Activated naive CD4-positive, alpha-beta T cell treated with anti-CD3 and anti-CD28 coated beads for 36 hours (primary cell): ENCODE measurements at regions of chr16 and their contacts with region 1.

Region 1: DNA sequence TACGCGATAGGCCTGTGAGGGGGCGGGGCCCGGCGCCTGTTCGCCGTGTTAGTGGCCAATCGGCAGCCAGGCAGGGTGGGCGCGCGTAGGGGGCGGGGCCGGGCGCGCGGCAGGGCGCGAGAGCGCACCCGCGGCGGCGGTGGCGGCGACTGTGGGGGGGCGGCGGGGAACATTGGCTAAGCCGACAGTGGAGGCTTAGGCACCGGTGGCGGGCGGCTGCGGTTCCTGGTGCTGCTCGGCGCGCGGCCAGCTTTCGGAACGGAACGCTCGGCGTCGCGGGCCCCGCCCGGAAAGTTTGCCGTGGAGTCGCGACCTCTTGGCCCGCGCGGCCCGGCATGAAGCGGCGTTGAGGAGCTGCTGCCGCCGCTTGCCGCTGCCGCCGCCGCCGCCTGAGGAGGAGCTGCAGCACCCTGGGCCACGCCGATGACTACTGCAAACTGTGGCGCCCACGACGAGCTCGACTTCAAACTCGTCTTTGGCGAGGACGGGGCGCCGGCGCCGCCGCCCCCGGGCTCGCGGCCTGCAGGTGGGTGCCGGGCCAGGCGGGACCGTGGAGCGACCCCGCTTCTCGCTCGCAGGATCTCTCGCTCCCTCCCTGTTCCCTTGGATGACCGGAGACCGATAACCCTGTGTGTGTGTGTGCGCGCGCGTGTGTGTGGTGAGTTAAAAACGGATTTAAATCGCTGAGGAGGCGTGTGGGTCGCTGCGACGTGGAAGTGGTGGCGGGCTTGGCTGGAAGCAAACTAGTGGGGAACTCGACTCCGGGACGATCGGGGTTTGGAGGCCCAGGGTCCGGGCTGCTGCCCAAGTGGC is at the start of gene NFATC3:
- DNase-seq: peak; percentile 99
- H3K4me3 Mint-ChIP-seq: peak within 1 kb of the TSS; percentile 81
- H3K27ac Mint-ChIP-seq: peak within 1 kb of the TSS; percentile 95
- H3K4me1 Mint-ChIP-seq: peaks cover 64% of the 10 kb centered on the region
- H3K27me3 Mint-ChIP-seq: no peaks in the 10 kb centered on the region
- total RNA-seq, gene NFATC3: 49.1 to 50.3 TPM

Region 2: DNA sequence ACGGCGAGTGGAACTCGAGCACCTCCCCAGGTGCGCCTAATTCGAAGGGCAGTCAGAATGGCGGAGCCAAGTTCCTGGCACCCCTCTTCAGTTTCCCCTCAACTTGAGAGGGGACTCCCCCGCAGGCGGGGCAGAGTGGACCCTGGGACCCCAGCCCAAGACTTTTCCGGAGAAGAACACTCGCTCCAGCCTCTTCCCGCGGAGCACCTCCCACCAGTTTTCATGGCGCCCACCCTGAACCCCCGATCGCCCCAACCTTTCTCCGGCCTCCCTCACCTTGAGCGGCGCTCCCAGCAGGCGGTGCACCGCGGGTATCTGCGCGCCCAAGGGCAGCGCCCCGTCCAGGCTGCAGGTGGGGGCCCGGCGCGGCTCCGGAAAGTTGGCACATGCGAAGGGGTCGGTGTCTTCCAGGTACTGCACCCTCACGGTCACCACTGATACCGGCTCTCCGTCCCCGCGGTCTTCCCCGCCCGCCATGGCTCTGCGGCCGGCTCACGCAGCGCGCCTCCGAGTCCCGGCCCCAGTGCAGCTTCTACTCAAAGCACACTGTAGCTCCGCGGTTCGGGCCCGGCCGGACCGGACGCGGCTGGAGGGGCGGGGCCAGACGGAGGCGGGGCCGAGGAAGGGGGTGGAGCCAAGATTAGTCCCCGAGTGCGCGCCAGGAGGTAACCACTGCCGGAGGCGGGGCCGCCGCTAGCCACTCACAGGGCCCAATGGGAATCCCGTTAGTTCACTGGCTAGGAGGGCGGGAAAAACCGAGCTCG is 838.3 kb before region 1 on chr16 and contains the start of gene FHOD1:
- CTCF ChIA-PET with region 1: no interaction called
- intact Hi-C with region 1: loop called (anchors 10 kb)
- DNase-seq: peak; percentile 99
- H3K4me3 Mint-ChIP-seq: peak within 1 kb of the TSS; percentile 89
- H3K27ac Mint-ChIP-seq: peak within 1 kb of the TSS; percentile 76
- H3K4me1 Mint-ChIP-seq: peaks cover 51% of the 10 kb centered on the region
- H3K27me3 Mint-ChIP-seq: peaks cover 8% of the 10 kb centered on the region
- total RNA-seq, gene FHOD1: 70.7 to 73.7 TPM

Region 3: DNA sequence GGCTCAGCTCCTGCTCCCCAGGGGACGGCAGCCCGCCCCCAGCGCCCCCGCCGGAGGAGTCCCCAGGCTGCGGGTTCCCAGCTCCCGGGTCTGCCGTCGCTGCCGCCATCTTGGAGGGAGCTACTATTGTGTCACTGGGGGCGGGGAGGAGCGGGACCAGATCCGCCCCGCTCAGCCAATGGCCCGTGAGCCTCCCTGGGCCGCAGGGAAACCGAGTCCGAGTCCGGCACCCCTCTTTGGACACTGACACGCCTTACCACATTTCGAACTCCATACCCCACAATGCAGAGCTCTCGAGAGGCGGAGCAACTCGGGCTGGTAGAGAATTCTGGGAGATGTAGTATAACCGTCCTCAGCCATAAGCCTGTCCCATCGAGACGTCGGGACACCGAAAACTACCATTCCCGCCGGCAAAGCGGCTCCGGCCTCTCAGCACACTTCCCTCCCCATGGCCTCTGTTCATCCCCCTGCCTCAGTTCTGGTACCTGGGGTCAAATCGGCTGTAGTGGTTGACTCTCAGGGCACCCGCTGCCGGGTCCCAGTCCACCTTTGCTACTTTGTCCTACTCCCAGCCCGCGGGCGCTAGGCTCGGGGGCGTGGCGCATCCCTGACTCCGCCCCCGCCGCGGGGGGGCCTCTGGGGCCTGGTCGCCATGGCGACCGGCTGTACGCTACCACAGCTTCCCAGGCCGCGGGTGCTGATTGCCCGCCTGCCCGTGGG is 278.9 kb before region 1 on chr16 and contains the starts of genes RANBP10 and TSNAXIP1:
- CTCF ChIA-PET with region 1: no interaction called
- intact Hi-C with region 1: loop called (anchors 1 kb)
- DNase-seq: peak; percentile 98
- H3K4me3 Mint-ChIP-seq: peak within 1 kb of the TSS; percentile 86
- H3K27ac Mint-ChIP-seq: peak within 1 kb of the TSS; percentile 81
- H3K4me1 Mint-ChIP-seq: peaks cover 36% of the 10 kb centered on the region
- H3K27me3 Mint-ChIP-seq: no peaks in the 10 kb centered on the region
- total RNA-seq, gene RANBP10: 12.4 to 16.1 TPM
- total RNA-seq, gene TSNAXIP1: 0.35 to 0.50 TPM

Region 4: DNA sequence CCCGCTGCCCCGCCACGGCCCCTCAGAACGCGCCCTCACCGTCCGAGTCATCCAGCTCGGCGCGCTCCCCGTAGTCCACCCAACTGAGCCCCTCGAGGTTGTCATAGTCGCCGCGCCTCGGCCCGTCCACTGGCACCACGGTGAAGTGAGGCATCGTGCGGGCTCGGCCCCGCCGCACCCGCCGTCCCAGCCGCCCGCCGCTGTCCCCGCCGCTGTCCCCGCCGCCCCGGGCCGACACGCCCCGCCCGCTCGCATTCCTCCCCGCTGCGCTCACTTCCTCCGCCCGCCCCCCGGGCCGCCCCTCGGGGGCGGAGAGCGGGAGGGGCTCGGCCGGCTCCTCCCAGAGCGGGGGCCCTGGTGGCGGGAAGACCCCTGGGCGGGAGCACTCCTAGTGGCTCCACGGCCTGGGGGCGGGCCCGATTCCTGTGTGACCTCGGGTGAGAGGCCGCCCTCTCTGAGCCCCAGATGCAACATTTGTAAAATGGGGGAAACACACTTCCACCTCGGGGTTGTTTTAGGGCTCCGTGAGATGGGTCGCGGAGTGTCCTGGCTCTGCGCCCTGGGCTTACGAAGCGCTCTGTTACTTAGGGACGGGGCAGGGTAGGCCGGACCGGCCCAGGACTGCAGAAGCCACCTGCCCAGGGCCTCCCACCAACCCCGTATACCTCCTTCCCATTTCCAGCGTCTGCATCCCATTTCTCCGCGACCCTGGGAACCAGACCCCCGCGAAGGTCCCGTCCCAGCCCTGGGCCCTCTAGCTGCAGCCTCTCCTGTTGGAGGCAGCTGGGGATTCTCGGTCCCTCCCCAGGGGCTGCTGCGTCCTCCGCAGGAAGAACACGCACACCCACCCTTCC is 116.8 kb before region 1 on chr16 and contains the start of gene SLC12A4:
- CTCF ChIA-PET with region 1: no interaction called
- intact Hi-C with region 1: loop called (anchors 1 kb)
- DNase-seq: peak; percentile 93
- H3K4me3 Mint-ChIP-seq: peak within 1 kb of the TSS; percentile 97
- H3K27ac Mint-ChIP-seq: peak within 1 kb of the TSS; percentile 78
- H3K4me1 Mint-ChIP-seq: peaks cover 10% of the 10 kb centered on the region
- H3K27me3 Mint-ChIP-seq: no peaks in the 10 kb centered on the region
- total RNA-seq, gene SLC12A4: 24.3 to 28.9 TPM

Region 5: GRCh38 chr16:68074850-68075555 is 10.5 kb before region 1 on chr16:
- CTCF ChIA-PET with region 1: interaction called, 12 read pairs
- intact Hi-C with region 1: no loop called
- DNase-seq: peak; percentile 62
- H3K4me3 Mint-ChIP-seq: no peak overlapping the region
- H3K27ac Mint-ChIP-seq: no peak overlapping the region
- H3K4me1 Mint-ChIP-seq: peaks cover 70% of the 10 kb centered on the region
- H3K27me3 Mint-ChIP-seq: no peaks in the 10 kb centered on the region

Region 6: GRCh38 chr16:68237243-68238028 is 152.0 kb after region 1 on chr16:
- CTCF ChIA-PET with region 1: no interaction called
- intact Hi-C with region 1: loop called (anchors 2 kb)
- DNase-seq: peak; percentile 95
- H3K4me3 Mint-ChIP-seq: peak overlapping the region; percentile 93
- H3K27ac Mint-ChIP-seq: peak overlapping the region; percentile 79
- H3K4me1 Mint-ChIP-seq: peaks cover 30% of the 10 kb centered on the region
- H3K27me3 Mint-ChIP-seq: no peaks in the 10 kb centered on the region

Region 7: DNA sequence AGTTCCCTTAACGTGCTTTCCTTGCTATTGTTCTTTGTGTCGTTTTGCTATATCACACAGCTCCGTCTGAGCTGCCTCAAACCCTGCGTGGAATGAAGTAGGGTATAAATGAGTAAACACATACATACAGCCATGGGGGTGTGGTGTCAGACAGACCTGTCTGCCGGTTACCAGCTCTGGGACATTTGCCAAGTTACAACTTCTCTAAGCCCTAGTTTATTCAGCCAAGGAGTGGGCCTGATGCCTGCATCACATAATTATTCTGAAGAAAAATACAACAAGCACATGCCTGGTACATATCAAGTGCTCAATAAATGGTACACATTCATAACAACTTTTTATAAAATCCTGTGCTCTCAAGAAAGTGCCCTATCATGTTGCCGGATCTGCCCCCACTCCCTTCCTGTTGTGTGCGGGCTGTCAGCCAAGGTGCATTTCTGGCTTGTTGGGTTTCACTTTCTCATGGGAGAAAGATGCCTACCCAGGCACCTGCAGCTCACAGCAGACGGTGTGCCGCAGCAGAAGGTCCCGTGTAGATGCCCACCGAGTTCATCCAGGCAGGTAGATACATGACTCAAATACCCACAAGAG is 332.3 kb after region 1 on chr16:
- CTCF ChIA-PET with region 1: no interaction called
- intact Hi-C with region 1: loop called (anchors 5 kb)
- DNase-seq: peak; percentile 89
- H3K4me3 Mint-ChIP-seq: peak overlapping the region; percentile 66
- H3K27ac Mint-ChIP-seq: peak overlapping the region; percentile 92
- H3K4me1 Mint-ChIP-seq: peaks cover 52% of the 10 kb centered on the region
- H3K27me3 Mint-ChIP-seq: no peaks in the 10 kb centered on the region